ENCODE measurements at regions of chr4 and their contacts with region 1.

Region 1: GRCh38 chr4:112765317-112765975 is 128.5 kb downstream of the LARP7 start:
- DNase-seq: no peak
- H3K4me3 ChIP-seq: no peak overlapping the region
- H3K27ac ChIP-seq: no peak overlapping the region
- H3K4me1 ChIP-seq: no peaks in the 10 kb centered on the region
- H3K27me3 ChIP-seq: no peaks in the 10 kb centered on the region
- CTCF ChIP-seq: peak in 4 of 6 experiments; percentile 28 to 42 (median 37)
- POLR2A ChIP-seq: no peak

Region 2: DNA sequence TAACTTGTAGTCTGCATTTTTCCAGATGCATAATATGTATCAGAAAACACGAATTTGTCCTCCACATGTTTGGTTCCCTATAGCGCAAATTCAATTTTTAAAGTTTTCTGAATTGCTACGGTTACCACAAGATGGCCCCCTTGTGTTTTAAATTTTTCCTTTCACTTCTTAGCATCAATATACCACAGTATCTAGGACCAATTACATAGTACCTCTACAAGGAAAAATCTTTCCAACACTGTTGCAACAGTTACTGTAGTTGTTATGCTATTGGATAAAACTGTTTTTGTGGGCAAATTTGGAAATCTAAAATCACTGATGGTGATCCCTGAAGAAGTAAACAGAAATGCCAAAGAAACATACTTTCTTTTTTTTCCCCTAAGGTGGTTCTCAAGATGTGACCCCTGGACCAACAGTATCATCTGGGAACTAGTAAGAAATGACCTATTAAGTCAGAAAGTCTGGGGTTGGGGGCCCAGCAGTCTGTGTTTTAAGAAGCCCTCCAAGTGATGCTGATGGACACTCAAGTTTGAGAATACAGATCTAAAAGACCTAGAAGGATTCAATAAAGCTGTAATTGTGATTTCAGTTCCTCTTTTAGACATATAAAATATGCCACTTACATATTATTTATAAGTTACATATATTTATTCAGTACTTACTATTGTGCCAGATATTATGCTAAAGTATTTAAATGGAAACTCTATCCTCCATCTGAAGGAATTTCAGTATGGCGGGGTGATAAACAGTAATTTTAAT is 131.8 kb before region 1 on chr4:
- intact Hi-C with region 1: loop called (anchors 5 kb)
- DNase-seq: no peak
- H3K4me3 ChIP-seq: no peak overlapping the region
- H3K27ac ChIP-seq: no peak overlapping the region
- H3K4me1 ChIP-seq: peaks cover 6 to 19% of the 10 kb centered on the region in 2 donors
- H3K27me3 ChIP-seq: no peaks in the 10 kb centered on the region
- CTCF ChIP-seq: peak; percentile 14 to 65 (median 50)
- POLR2A ChIP-seq: no peak

Region 3: DNA sequence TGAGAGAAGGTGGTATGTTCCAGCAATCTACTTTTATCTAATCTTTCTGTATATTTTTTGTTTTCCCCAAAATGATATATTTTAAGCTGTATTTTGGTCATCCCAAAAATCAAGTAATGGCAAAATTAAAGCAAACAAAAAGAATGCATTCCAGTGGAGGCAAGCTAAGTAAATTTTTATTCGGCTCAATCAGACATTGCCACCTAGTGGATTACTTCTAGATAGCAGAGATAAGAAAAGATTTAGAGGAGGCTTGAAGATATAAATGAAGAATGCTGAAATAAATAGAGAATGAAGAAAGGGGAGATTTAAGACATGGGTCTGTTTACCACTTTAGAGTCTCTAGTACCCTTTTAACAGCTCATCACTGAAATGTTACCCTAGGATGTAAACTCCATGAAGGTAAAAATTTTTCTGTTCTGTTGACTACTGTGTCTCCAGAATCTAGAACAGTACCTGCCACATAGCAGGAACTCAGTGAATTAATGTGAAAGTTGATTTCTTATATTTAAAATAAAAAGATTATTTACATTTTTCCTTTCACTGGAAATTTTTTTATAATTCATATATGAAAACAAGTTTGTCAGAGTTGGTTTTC is 173.1 kb after region 1 on chr4:
- intact Hi-C with region 1: loop called in 1 of 2 experiments (anchors 10 kb)
- DNase-seq: no peak
- H3K4me3 ChIP-seq: no peak overlapping the region
- H3K27ac ChIP-seq: no peak overlapping the region
- H3K4me1 ChIP-seq: no peaks in the 10 kb centered on the region
- H3K27me3 ChIP-seq: no peaks in the 10 kb centered on the region
- CTCF ChIP-seq: peak; percentile 53 to 78 (median 69)
- POLR2A ChIP-seq: no peak

Region 4: DNA sequence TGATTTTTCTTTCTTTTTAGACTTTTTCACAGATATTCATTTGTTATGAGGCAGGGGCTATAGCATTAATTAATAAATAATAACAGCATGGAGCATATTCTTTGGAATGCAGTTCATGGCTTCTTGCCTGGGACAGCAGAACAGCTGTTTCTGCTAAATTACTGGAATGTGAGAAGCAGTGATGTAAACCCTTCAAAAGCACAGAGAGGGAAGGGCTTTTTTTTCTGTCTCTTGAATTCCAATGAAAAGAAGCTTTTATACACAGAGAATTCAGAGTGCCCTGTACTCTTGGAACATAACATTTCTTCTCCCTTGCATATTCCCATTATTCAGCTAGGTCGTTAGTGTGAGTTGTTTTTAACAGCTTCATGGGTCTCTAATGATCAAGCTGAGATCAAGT is 255.5 kb after region 1 on chr4:
- intact Hi-C with region 1: no loop called
- DNase-seq: no peak
- H3K4me3 ChIP-seq: no peak overlapping the region
- H3K27ac ChIP-seq: no peak overlapping the region
- H3K4me1 ChIP-seq: no peaks in the 10 kb centered on the region
- H3K27me3 ChIP-seq: no peaks in the 10 kb centered on the region
- CTCF ChIP-seq: no peak
- POLR2A ChIP-seq: no peak